ENCODE measurements at regions of chr7 and their contacts with region 1.

Region 1: DNA sequence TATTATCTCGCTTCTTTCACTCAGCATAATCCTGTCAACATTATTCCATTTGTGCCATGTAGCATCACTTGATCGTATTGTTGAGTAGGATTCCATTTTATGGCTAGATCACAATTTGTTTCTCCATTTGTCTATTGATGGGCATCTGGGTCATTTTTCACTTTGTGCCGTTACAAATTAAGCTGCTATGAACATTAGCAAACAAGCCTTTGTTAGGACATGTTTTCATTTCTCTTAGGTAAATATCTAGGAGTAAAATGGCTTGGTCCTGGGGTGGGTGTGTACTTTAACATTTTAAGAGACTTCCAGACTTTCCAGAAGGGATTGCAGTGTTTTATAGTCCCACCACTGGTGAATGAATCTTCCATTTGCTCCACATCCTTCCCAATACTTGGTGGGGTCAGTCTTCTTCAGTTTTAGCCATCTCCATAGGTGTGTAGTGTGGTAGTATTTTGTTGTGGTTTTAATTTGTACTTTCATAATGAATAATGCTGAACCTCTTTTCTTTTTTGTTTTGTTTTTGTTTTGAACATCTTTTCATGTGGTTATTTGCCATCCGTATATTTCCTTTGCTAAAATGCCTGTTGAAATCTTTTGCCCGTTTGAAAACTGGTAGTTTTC is 86.2 kb downstream of the ANKRD61 start:
- DNase-seq: no peak
- H3K4me3 ChIP-seq: no peak overlapping the region
- H3K27ac ChIP-seq: no peak overlapping the region
- H3K4me1 ChIP-seq: no peaks in the 10 kb centered on the region
- H3K27me3 ChIP-seq: no peaks in the 10 kb centered on the region
- CTCF ChIP-seq: no peak

Region 2: DNA sequence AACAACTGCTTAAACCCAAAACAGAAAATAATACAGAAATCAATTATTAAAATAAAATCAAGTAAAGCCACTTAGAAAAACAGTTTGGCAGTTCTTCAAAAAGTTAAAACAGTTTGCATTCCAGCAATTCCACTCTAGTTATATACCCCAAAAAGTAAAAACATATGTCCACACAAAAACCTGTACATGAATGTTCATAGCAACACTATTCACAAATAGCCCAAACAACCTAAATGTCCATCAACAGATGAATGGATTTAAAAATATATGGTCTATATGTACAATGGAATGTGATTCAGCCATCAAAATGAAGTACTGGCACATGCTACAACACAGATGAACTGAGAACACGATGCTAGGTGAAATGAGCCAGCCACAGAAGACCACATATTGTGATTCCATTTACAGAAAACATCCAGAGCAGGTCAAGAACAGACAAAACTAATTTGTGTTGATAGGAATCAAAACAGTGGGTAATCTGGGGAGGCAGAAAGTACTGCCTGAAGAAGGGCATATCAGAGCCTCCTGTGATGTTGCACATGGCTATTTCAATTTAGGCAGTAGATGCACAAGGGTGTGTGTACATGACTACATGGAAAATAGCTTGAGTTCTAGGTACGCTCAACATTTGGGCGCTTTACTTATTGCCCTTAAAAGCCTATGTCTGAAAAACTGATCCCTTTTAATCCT is 88.7 kb after region 1 on chr7:
- CTCF ChIA-PET with region 1: no interaction called
- dilution Hi-C with region 1: loop called (anchors 5 kb)
- in situ Hi-C with region 1: no loop called
- intact Hi-C with region 1: no loop called
- DNase-seq: no peak
- H3K4me3 ChIP-seq: no peak overlapping the region
- H3K27ac ChIP-seq: no peak overlapping the region
- H3K4me1 ChIP-seq: no peaks in the 10 kb centered on the region
- H3K27me3 ChIP-seq: no peaks in the 10 kb centered on the region
- CTCF ChIP-seq: no peak